Posterior cingulate gyrus (tissue), 11 donors: ENCODE measurements at regions of chr1 and their contacts with region 1.

Region 1: GRCh38 chr1:44835738-44836675 is 7.0 kb downstream of the PTCH2 start:
- DNase-seq: peak; percentile 64 to 97 (median 86)

Region 2: DNA sequence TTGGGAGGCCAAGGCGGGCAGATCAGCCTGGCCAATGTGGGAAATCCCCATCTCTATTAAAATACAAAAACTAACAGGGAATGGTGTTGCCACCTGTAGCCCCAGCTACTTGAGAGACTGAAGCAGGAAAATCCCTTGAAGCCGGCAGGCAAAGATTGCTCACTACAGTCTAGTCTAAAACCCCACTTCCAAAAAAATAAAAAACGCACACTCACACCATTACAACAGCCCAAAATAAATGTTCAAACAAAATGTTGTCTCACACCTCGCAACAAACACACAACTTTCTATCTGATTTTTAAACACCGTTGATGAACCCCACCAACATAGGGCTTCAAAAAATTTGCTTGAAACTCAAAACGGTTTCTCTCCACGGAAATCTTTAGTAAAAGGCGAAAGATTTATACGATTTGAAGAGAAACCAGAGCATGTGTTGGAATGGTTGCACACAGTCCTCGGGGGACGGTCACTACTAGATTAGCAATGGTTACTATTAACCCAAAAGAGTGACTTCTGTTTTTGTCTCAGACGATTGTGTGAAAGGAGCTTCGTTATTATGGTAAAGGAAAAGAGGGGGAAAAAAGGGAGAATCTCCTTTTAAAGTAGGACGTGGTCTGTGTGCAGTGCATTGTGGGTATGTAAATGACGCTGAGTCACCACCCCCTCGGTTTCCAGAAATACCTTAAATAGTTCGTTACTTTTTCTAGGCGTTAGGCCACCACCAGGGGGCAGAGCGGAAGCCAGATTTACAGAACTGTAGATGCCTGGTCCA is 105.1 kb before region 1 on chr1 and contains the start of gene RNU5D-1:
- intact Hi-C with region 1: loop called (anchors 5 kb)
- DNase-seq: peak; percentile 84 to 98 (median 94)

Region 3: GRCh38 chr1:44985747-44986359 is 149.8 kb after region 1 on chr1:
- intact Hi-C with region 1: loop called (anchors 5 kb)
- DNase-seq: peak in 2 of 10 donors; percentile 14 to 25